ENCODE measurements at regions of chr1 and their contacts with region 1.

Region 1: GRCh38 chr1:167599957-167600581 is 30.0 kb upstream of the RCSD1 start:
- DNase-seq: no peak
- H3K4me3 ChIP-seq: no peak overlapping the region
- H3K27ac ChIP-seq: peak overlapping the region in 2 of 4 donors; percentile 4 to 65
- H3K4me1 ChIP-seq: peaks cover 13 to 28% (median 22%) of the 10 kb centered on the region in 3 donors
- H3K27me3 ChIP-seq: no peaks in the 10 kb centered on the region
- CTCF ChIP-seq: peak in 5 of 6 experiments; percentile 53 to 73 (median 58)
- POLR2A ChIP-seq: no peak

Region 2: GRCh38 chr1:167312871-167313270 is 287.2 kb before region 1 on chr1:
- intact Hi-C with region 1: no loop called
- DNase-seq: no peak
- H3K4me3 ChIP-seq: no peak overlapping the region
- H3K27ac ChIP-seq: no peak overlapping the region
- H3K4me1 ChIP-seq: no peaks in the 10 kb centered on the region
- H3K27me3 ChIP-seq: no peaks in the 10 kb centered on the region
- CTCF ChIP-seq: no peak
- POLR2A ChIP-seq: no peak

Region 3: GRCh38 chr1:167687919-167688519 is 88.0 kb after region 1 on chr1:
- intact Hi-C with region 1: loop called (anchors 2 kb)
- DNase-seq: no peak
- H3K4me3 ChIP-seq: no peak overlapping the region
- H3K27ac ChIP-seq: no peak overlapping the region
- H3K4me1 ChIP-seq: peaks cover 0 to 26% (median 10%) of the 10 kb centered on the region in 3 donors
- H3K27me3 ChIP-seq: no peaks in the 10 kb centered on the region
- CTCF ChIP-seq: peak; percentile 87 to 96 (median 94)
- POLR2A ChIP-seq: no peak

Region 4: GRCh38 chr1:167957710-167958109 is 357.6 kb after region 1 on chr1:
- intact Hi-C with region 1: no loop called
- DNase-seq: no peak
- H3K4me3 ChIP-seq: no peak overlapping the region
- H3K27ac ChIP-seq: no peak overlapping the region
- H3K4me1 ChIP-seq: no peaks in the 10 kb centered on the region
- H3K27me3 ChIP-seq: no peaks in the 10 kb centered on the region
- CTCF ChIP-seq: no peak
- POLR2A ChIP-seq: no peak